GM10248 (cell line): ENCODE measurements at regions of chr15 and their contacts with region 1.

Region 1: DNA sequence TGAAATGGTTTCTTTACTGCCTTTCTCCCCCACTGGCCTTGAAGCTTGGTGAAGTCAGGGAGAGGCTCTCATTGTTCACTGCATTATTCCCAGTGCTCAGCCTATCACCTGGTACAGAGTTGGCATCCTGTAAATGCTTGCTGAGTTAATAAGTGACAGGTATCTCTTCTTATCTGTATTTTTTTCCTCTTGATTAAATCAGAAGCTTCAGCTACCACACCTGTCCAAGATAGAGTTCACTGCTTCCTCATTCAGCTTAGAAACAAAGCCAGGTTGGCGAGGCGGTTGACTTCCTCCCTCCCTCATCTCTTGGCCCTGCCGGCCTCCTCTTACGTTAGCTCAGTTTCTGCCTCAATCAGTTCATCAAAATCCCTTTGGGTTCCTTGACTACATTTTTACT is 142.8 kb downstream of the LIPC start:
- DNase-seq: no peak
- CTCF ChIP-seq: no peak

Region 2: DNA sequence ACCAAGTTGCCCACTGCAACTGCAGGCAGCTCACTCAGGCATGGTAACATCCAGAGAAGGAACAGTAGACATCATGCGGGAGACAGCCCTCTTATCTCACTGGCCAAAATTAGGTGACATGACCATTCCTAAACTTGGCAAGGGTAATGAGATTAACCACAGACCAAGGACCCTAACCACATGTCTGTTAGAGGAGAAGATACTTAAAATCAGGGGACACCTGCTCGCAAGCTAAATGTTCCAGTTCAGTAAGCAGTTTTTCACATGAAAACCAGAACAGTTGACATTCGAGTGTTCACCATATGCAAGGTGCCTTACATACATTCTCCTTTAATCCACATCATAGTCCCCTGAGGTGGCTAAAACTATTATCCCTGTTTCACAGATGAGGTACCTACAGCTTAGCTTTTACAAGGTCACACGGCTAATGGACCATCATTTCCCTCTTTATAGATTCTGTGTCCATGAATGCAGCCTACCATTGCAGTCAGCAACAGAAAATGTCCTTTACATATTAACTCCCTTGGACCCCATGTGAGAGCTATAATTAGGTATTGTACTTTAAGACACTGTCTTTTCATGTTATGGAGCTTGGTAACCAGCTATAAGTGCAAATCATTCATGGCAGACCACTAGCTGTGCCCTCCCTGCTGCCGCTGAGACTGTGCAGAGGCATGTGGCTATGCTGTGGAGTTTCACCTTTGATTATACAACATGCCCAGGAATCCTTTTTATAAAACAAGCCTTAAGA is 11.2 kb after region 1 on chr15:
- CTCF ChIA-PET with region 1: interaction called, 11 read pairs
- POLR2A ChIA-PET with region 1: no interaction called
- DNase-seq: peak; percentile 22
- CTCF ChIP-seq: no peak